SK-N-SH (cell line): ENCODE measurements at regions of chr6 and their contacts with region 1.

Region 1: DNA sequence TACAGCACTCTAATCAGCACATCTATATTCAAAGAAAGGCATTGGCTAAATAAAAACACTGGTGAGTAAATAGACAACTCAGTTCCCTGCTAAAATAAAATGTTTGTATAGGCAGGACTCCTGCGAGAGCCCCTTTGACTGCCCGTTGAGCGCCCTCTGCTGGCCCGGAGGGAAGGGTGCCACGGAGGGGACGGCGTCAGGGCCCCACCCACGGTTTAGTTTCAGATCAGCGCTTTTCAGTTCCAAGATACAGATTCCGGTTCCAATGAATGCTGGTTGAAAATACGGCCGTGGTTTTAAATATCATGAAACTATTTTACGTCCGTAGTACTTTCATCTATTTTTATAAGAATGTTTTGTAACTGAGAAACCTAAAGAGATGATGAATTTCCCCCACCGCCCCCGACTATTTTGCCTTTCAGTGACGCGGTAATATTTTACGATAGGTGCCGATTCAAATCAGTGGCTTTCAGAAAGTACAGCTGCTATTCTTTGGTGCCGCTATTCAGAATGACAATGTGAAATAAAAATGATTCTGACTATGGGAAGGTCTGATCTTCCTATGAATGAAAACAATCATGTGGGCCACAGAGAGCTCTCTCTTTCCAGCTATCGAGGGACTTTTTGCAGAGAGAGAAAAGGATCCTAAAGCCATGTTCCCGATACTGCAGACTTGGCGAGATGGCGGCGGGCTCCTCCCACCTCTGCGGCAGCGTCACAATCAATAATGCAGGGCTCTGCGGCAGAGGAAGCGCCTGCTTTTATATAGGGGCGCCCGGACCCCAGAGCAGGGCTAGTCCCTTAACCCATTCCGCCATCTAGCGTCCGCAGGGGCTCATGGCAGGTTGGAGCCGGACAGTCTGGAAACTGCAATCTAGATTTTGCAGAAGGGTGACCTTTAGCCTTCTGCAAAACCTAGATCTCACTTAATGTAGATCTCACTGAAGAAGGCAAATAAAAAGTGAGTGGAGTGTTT is 10.6 kb upstream of the CCN6 start:
- DNase-seq: peak; percentile 93
- H3K4me3 ChIP-seq: peak overlapping the region; percentile 68 to 76
- H3K27ac ChIP-seq: peak overlapping the region; percentile 96
- H3K4me1 ChIP-seq: peaks cover 6 to 17% of the 10 kb centered on the region in 2 experiments
- H3K27me3 ChIP-seq: no peaks in the 10 kb centered on the region
- CTCF ChIP-seq: peak; percentile 98
- EP300 ChIP-seq: no peak
- RAD21 ChIP-seq: peak; percentile 97

Region 2: DNA sequence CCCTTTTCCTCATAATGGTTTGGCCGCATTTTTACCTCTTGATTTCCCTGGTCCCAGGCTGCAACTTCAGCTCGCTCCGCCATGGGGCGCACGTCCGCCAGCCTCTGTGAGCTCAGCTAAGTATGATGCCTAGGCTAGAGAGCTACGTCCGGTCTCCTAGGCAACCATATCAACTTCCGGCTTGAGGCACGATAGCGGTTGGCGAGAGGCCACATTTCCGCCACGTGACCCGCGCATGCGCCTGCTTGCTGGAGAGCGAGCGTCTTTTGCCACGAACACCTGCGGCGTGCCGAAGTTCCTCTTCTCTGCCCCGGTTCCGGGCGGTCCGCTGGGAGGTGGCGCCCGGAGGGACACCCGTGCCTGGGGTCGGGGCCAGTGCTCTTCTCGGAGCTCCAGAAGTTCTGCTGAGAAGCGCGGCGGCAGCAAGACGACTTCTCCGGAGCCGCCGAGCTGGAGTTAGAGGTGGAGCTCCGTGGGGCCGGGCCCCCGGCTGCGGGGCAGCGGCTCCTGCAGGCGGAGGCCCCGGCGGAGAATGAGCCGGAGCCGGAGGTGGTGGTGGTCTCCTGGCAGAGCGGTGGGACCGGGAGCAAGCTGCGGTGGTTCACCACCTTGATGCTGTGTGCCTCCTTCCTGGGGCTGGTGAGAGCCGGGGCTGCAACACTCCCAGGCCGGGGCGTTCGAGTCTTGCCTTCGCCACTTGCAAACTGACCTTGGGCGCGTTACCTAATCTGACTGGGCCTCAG is 784.1 kb before region 1 on chr6:
- CTCF ChIA-PET with region 1: interaction called, 32 read pairs
- POLR2A ChIA-PET with region 1: interaction called, 3 read pairs
- DNase-seq: peak; percentile 95
- H3K4me3 ChIP-seq: peak overlapping the region; percentile 74 to 98
- H3K27ac ChIP-seq: peak overlapping the region; percentile 83 to 85
- H3K4me1 ChIP-seq: peaks cover 2 to 10% of the 10 kb centered on the region in 2 experiments
- H3K27me3 ChIP-seq: no peaks in the 10 kb centered on the region
- CTCF ChIP-seq: peak; percentile 91
- EP300 ChIP-seq: no peak; a peak in 1 of 4 replicates
- RAD21 ChIP-seq: peak; percentile 89

Region 3: DNA sequence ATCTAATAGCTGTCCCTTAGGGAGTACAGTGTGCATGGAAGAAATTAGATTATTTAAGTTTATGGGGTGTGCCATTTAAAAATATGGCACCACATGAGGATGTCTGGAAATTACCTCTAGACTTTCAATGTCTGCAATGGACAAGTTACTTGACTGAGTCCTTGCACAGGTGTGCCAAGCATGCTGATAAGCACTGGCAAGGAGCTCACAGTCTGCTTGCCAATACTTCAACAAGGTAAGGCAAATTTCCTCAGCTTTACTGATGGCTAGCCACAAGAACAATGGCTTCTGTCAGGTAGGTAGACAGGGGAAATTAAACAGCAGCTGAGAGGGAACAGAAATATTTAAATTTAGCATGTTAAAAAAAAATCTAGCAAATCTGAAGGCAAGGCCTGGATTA is 346.5 kb before region 1 on chr6:
- CTCF ChIA-PET with region 1: interaction called, 14 read pairs
- POLR2A ChIA-PET with region 1: no interaction called
- DNase-seq: no peak
- H3K4me3 ChIP-seq: no peak overlapping the region
- H3K27ac ChIP-seq: no peak overlapping the region; a peak in 1 of 4 replicates
- H3K4me1 ChIP-seq: peaks cover 0 to 24% of the 10 kb centered on the region in 2 experiments; a peak in 2 of 4 replicates
- H3K27me3 ChIP-seq: no peaks in the 10 kb centered on the region
- CTCF ChIP-seq: no peak
- EP300 ChIP-seq: no peak
- RAD21 ChIP-seq: no peak

Region 4: GRCh38 chr6:111997078-111997852 is 46.1 kb before region 1 on chr6:
- CTCF ChIA-PET with region 1: interaction called, 10 read pairs
- POLR2A ChIA-PET with region 1: no interaction called
- DNase-seq: peak; percentile 76
- H3K4me3 ChIP-seq: peak overlapping the region in 1 of 2 experiments; percentile 40; a peak in 1 of 4 replicates
- H3K27ac ChIP-seq: no peak overlapping the region
- H3K4me1 ChIP-seq: peaks cover 4 to 12% of the 10 kb centered on the region in 2 experiments; a peak in 1 of 4 replicates
- H3K27me3 ChIP-seq: no peaks in the 10 kb centered on the region
- CTCF ChIP-seq: peak; percentile 90
- EP300 ChIP-seq: no peak
- RAD21 ChIP-seq: peak; percentile 99

Region 5: DNA sequence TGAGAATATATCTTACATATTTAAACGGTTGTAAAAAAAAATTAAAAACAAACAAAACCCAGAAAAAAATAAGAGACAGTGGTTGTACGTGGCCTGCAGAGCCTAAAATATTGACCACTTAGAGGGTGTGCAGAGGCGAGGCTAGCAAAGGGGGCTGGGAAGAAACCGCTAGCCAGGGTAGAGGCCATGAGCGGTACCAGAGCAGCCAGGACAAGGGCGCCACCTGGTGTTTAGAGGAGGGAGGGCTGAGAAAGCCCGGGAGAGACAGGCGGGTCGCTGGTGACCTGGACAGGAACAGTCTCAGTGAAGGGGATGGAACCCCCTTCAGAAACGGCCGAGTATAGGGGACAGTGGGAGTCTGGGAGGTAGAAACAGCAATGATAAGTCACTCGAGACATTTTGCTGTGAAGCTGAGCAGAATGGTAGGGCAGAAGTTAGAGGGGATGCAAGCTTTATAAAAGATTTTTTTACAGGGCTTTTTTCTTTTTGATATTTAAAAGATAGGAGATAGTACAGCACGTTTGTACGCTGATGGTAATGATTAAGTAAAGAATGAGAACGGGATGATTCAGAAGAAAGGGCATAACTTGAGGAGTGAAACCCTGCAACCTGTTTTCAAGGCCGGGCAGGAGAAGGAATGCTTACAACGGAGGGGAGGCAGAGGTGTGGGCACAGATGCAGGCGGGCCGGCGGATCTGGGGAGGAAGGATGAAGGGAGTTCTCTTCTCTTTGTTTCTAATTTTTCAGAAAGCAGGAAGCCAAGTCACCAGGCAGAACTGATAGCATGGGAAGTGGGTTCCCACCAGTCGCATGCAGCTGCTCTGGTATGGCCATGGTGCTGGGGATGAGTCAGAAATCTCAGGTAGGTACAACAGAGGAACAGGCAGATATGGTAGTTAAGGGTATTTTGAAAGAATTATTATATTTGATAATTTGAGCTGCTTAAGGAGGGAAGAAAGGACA is 120.3 kb after region 1 on chr6:
- CTCF ChIA-PET with region 1: interaction called, 22 read pairs
- POLR2A ChIA-PET with region 1: no interaction called
- DNase-seq: peak; percentile 83
- H3K4me3 ChIP-seq: no peak overlapping the region; a peak in 1 of 4 replicates
- H3K27ac ChIP-seq: no peak overlapping the region
- H3K4me1 ChIP-seq: no peaks in the 10 kb centered on the region
- H3K27me3 ChIP-seq: no peaks in the 10 kb centered on the region
- CTCF ChIP-seq: peak; percentile 96
- EP300 ChIP-seq: no peak
- RAD21 ChIP-seq: peak; percentile 98

Region 6: DNA sequence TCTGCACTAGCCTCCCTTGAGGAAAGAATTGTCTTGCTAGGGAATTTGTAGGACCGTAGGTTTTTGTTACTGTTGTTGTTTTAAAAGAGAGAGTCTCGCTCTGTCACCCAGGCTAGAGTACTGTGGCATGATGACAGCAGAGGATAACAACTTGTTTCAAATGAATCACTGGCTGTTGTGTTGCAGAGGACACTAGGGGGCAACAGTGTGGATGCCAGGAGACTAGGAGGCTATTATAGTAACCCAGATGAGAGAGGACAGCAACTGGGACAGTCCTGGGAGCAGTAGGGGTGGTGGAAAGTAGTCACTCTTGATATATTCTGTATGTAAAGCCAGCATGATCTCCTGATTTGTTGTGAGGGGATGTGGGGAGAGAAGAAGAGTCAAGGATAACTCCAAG is 252.8 kb after region 1 on chr6:
- CTCF ChIA-PET with region 1: no interaction called
- POLR2A ChIA-PET with region 1: no interaction called
- DNase-seq: no peak
- H3K4me3 ChIP-seq: no peak overlapping the region
- H3K27ac ChIP-seq: peak overlapping the region in 1 of 2 experiments; percentile 99; a peak in 1 of 4 replicates
- H3K4me1 ChIP-seq: peaks cover 0 to 36% of the 10 kb centered on the region in 2 experiments; a peak in 3 of 4 replicates
- H3K27me3 ChIP-seq: no peaks in the 10 kb centered on the region
- CTCF ChIP-seq: peak; percentile 67
- EP300 ChIP-seq: no peak
- RAD21 ChIP-seq: peak; percentile 38; the same call in 1 of the 2 replicates